ENCODE measurements at regions of chr7 and their contacts with region 1.

Region 1: GRCh38 chr7:92708111-92709042 is 118.2 kb upstream of the FAM133B start:
- DNase-seq: no peak
- H3K4me3 Mint-ChIP-seq: no peak overlapping the region
- H3K27ac Mint-ChIP-seq: peak overlapping the region; percentile 89
- H3K4me1 Mint-ChIP-seq: peaks cover 52% of the 10 kb centered on the region
- H3K27me3 Mint-ChIP-seq: no peaks in the 10 kb centered on the region

Region 2: DNA sequence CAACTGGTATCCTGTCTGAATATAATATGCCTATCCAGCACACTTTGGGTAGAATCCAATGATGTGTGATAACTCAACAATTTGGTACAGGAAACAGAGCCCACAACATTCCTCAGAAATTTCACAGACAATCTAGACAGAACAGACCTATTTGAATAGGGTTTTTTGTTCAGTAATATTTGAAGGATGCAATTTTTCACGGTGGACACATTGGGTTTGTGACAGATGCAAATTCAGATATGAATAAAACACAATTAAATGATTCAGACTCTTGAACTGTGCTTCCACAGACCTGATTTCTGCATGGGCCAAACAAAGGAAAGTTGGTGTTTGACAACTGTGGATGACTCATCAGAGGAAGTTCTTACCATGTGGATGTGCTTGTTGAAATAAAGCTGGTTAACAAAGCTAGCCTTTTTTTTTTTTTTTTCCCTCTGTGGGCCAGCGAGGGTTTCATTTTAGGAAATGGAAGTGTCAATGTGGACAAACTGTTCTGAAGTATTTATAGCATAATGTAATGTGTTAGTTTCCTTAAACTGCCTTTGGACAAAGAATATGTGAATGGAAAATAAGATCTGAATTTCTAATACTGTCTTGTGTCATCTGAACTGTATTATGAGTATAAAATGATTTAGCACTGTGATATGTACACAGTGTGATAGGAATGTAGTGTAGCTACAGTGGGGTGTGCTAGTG is 75.0 kb before region 1 on chr7:
- CTCF ChIA-PET with region 1: no interaction called
- intact Hi-C with region 1: loop called (anchors 1 kb)
- DNase-seq: peak; percentile 49
- H3K4me3 Mint-ChIP-seq: no peak overlapping the region
- H3K27ac Mint-ChIP-seq: peak overlapping the region; percentile 92
- H3K4me1 Mint-ChIP-seq: peaks cover 84% of the 10 kb centered on the region
- H3K27me3 Mint-ChIP-seq: no peaks in the 10 kb centered on the region

Region 3: DNA sequence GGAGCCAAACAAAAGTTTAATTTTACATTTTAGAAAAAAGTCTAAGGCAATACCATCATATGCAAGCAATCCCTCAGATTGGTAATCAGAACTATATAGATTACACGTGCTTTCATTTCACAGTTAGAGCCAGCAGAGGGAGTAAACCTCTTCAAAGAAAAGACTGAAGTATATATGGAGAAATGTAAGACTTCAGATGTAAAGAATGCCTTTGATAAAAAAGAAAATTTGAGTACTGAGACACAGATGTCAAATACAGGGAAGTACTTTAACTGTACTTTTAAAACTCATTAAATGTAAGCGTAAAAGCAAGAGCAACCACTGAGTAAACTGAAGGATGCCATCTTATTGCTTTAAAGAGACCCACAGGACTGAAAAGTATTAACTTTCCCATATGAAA is 16.8 kb before region 1 on chr7:
- CTCF ChIA-PET with region 1: interaction called, 4 read pairs
- intact Hi-C with region 1: loop called (anchors 1 kb)
- DNase-seq: peak; percentile 46
- H3K4me3 Mint-ChIP-seq: no peak overlapping the region
- H3K27ac Mint-ChIP-seq: peak overlapping the region; percentile 87
- H3K4me1 Mint-ChIP-seq: peaks cover 70% of the 10 kb centered on the region
- H3K27me3 Mint-ChIP-seq: no peaks in the 10 kb centered on the region

Region 4: DNA sequence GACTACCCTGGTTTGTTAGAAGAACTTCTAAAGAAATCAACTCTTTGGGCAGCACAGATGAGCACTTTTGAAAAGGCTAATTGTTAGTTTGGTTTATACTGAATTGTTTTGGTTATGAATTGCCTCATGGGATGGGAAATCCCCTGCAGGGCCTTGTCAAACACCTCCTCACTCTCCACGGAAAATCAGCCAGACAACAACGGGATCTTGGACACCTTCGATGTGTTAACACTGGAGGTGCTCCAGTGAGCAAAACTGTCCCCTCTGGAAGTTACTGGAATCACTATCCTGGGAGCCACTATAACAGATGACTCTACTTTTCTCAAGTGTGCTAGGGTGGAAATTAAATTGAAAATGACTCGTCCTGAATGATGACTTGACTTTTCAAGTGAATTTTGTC is 89.3 kb after region 1 on chr7:
- CTCF ChIA-PET with region 1: no interaction called
- intact Hi-C with region 1: loop called (anchors 1 kb)
- DNase-seq: peak; percentile 51
- H3K4me3 Mint-ChIP-seq: no peak overlapping the region
- H3K27ac Mint-ChIP-seq: no peak overlapping the region
- H3K4me1 Mint-ChIP-seq: peaks cover 29% of the 10 kb centered on the region
- H3K27me3 Mint-ChIP-seq: no peaks in the 10 kb centered on the region

Region 5: GRCh38 chr7:92910976-92911375 is 202.6 kb after region 1 on chr7:
- CTCF ChIA-PET with region 1: no interaction called
- intact Hi-C with region 1: no loop called
- DNase-seq: no peak
- H3K4me3 Mint-ChIP-seq: no peak overlapping the region
- H3K27ac Mint-ChIP-seq: no peak overlapping the region
- H3K4me1 Mint-ChIP-seq: peaks cover 4% of the 10 kb centered on the region
- H3K27me3 Mint-ChIP-seq: peaks cover 5% of the 10 kb centered on the region

Region 6: GRCh38 chr7:93117852-93118530 is 409.6 kb after region 1 on chr7 and contains the start of gene SAMD9:
- CTCF ChIA-PET with region 1: no interaction called
- intact Hi-C with region 1: loop called (anchors 5 kb)
- DNase-seq: peak; percentile 70
- H3K4me3 Mint-ChIP-seq: peak within 1 kb of the TSS; percentile 71
- H3K27ac Mint-ChIP-seq: peak within 1 kb of the TSS; percentile 65
- H3K4me1 Mint-ChIP-seq: peaks cover 47% of the 10 kb centered on the region
- H3K27me3 Mint-ChIP-seq: no peaks in the 10 kb centered on the region
- total RNA-seq, gene SAMD9: 2.9 to 3.1 TPM

Measured in activated naive CD4-positive, alpha-beta T cell treated with anti-CD3 and anti-CD28 coated beads for 36 hours (primary cell).